ENCODE measurements at regions of chr4 and their contacts with region 1.

Region 1: DNA sequence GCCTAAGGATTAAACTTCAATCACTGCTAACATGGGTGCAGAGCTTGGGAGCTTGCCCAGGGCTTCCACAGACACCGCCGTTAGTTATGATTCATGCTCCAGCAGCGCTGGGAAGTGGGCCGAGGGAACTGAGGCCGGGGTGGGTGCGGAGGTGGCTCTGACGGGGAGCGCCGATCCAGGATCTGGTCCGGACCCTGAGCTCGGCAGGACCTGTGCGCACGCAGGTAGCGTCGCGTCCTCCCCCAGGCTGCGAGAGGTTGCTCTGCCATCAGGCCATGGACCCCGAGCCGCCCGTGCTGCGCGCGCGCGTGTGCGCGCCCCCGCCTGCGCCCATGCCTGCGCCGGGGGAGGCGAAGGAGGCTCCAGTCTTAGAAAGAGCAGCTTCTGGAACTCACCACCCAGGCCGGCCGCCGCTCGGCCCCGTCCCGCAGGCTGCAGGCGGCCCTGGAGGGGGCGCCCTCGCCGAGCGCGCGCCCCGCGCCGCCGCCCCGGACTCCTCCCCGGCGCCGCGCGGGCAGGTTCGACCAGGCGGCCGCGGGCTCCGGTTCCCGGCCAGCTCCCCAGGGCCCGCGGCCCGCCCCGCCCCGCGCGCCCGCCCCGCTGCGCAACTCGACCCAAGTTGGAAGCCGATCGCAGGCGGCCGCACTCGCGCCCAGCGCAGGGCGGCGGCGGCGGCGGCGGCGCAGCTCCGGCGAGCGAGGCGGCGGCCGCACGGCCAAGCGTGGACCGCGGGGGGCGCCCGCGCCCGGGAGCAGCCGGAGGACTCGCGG is 729 bp upstream of the ADRA2C start:
- DNase-seq: peak in 1 of 2 donors; percentile 89
- H3K4me3 ChIP-seq: peak overlapping the region; percentile 49 to 78
- H3K27ac ChIP-seq: peak overlapping the region; percentile 89 to 90
- H3K4me1 ChIP-seq: peaks cover 0 to 29% of the 10 kb centered on the region in 2 donors
- H3K27me3 ChIP-seq: no peaks in the 10 kb centered on the region
- CTCF ChIP-seq: peak in 2 of 3 experiments; percentile 28 to 30

Region 2: DNA sequence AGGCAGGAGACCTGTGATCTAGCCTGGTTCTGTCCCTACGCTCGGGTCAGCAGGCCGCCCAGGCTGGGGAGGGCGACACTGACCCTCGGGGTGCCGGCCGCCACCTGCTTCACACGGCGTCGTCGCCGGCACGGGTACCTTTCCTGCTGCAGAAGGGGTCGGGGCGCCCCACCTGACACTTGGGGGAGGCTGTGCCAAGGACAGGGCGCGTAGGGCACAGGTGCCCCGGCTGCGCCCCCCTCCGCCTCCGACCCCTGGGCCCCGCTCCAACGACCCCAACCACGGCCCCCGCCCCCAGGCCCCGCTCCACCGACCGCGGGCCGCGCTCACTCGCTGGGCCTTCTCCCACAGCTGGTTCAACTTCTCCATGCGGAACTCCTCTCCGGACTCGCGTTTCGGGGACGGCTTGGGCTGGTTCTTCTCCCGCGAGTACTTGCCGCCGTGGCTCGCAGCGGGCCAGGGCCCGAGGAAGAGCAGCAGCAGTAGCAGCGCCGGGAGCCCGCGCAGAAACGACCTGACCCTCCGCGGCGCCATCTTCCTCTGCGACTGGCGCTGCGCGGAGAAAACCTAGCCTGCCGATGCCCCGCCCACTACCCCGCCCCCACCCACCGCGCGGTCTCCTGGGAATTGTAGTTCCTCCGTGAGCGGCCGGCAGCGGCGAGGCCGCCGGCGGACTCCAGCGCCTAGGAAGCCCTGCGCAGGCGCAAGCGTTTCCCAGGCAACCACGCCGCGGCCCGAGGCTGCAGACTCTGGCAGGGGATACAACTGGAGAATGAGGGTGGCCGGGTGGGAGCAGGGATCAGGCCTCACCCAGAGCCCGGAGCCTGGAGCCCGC is 233.4 kb before region 1 on chr4 and contains the start of gene LRPAP1:
- intact Hi-C with region 1: loop called (anchors 2 kb)
- DNase-seq: peak; percentile 65 to 95
- H3K4me3 ChIP-seq: peak within 1 kb of the TSS; percentile 96 to 99
- H3K27ac ChIP-seq: peak within 1 kb of the TSS; percentile 72 to 76
- H3K4me1 ChIP-seq: peaks cover 3 to 20% of the 10 kb centered on the region in 2 donors
- H3K27me3 ChIP-seq: no peaks in the 10 kb centered on the region
- CTCF ChIP-seq: no peak
- total RNA-seq, gene LRPAP1: 172 TPM

Region 3: DNA sequence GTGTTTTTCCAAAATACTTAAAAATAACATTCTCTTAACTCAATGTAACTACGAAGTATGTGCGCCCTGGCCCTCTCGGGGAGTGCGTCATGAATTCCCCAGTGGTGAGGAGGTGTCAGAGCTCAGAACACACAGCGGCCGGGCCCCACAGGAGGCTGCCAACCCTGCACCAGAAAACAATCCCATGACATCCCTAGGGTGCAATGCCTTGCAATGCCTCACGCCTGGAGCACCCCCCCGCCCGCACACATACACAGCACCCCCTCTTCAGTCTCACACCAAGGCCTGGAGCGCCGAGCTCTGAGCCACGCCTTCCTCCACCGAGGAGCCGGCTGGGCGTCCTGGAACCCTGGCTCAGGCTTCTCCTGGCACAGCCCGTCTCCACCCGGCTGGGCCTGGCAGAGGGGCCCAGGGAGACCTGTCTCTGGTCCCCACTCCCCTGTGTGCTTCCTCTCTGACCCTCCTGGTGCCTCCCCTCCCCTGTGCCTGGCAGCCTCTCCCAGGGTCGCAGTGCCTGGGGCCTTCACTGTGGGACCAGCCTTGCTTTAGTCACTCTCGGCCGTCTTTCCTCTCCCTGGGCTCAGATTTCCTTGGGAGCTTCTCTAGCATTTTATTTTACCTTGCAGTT is 107.4 kb before region 1 on chr4:
- intact Hi-C with region 1: loop called (anchors 2 kb)
- DNase-seq: peak; percentile 75 to 96
- H3K4me3 ChIP-seq: peak overlapping the region in 1 of 2 donors; percentile 44
- H3K27ac ChIP-seq: peak overlapping the region; percentile 92 to 97
- H3K4me1 ChIP-seq: peaks cover 6 to 22% of the 10 kb centered on the region in 2 donors
- H3K27me3 ChIP-seq: no peaks in the 10 kb centered on the region
- CTCF ChIP-seq: no peak

Region 4: DNA sequence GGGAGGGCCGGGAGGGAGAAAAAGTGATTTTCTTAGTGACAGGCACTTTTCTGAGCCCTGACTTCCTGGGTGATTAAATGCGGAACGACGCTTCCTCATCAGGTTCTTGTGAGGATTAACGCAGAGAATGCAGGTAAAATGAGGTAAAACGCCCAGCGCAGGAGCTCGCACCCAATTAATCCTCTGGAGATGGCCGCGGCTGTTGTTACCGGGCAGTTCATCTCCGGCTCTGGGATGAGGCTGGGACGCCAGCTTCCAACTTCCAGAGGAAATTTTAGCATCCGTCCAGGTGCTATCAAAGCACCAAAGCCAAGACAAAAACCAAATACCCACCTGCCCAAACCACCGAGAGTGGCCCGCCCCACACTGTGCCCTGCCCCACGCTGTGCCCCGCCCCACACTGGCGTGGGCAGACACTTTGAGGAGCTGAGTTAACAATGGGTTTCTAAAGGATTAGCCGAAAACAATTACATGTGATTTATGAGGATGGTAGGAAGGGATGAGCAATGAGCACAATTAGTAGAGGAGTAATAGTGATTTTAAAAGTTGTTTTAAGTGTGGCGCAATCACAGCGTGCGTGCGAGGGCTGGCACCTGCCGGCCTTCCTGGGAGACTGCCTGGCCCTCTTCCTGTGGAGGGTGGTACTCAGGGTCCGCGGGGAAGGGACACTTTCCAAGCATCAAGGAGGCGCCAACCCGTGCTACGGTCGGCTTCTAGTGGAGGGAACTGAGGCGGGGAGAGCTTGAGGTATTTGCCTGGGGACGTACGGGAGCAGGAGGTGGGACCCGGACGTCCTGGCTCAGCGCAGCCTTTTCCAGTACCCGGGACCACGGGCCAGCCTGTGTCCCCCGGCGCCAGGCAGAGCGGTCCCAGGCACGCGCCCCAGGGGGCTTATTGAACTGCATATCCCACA is 40.9 kb before region 1 on chr4:
- intact Hi-C with region 1: loop called (anchors 2 kb)
- DNase-seq: no peak
- H3K4me3 ChIP-seq: peak overlapping the region in 1 of 2 donors; percentile 26
- H3K27ac ChIP-seq: peak overlapping the region; percentile 74 to 86
- H3K4me1 ChIP-seq: peaks cover 9 to 49% of the 10 kb centered on the region in 2 donors
- H3K27me3 ChIP-seq: no peaks in the 10 kb centered on the region
- CTCF ChIP-seq: no peak

Region 5: GRCh38 chr4:3945511-3946290 is 180.2 kb after region 1 on chr4:
- intact Hi-C with region 1: loop called (anchors 10 kb)
- DNase-seq: no peak
- H3K4me3 ChIP-seq: no peak overlapping the region
- H3K27ac ChIP-seq: no peak overlapping the region
- H3K4me1 ChIP-seq: no peaks in the 10 kb centered on the region
- H3K27me3 ChIP-seq: no peaks in the 10 kb centered on the region
- CTCF ChIP-seq: no peak

Measured in ascending aorta (tissue), 2 donors.